Activated CD8-positive, alpha-beta T cell treated with anti-CD3 and anti-CD28 coated beads, Interleukin-2, amount 10 ng/mL, durations not matched to agents 7 days and 5 days (primary cell): ENCODE measurements at regions of chr6 and their contacts with region 1.

Region 1: GRCh38 chr6:158660333-158660754 is 10.5 kb downstream of the SYTL3 start:
- DNase-seq: peak; percentile 66
- ATAC-seq: peak; percentile 69
- H3K4me3 Mint-ChIP-seq: no peak overlapping the region
- H3K27ac Mint-ChIP-seq: peak overlapping the region; percentile 60
- H3K4me1 Mint-ChIP-seq: peaks cover 62% of the 10 kb centered on the region
- H3K27me3 Mint-ChIP-seq: no peaks in the 10 kb centered on the region

Region 2: GRCh38 chr6:158644231-158645063 is 15.9 kb before region 1 on chr6 and contains the start of gene DYNLT1:
- CTCF ChIA-PET with region 1: interaction called, 88 read pairs
- POLR2A ChIA-PET with region 1: interaction called, 19 read pairs
- DNase-seq: peak; percentile 91
- ATAC-seq: peak; percentile 74
- H3K4me3 Mint-ChIP-seq: peak within 1 kb of the TSS; percentile 99
- H3K27ac Mint-ChIP-seq: peak within 1 kb of the TSS; percentile 97
- H3K4me1 Mint-ChIP-seq: peaks cover 71% of the 10 kb centered on the region
- H3K27me3 Mint-ChIP-seq: no peaks in the 10 kb centered on the region
- total RNA-seq, gene DYNLT1: 79.0 to 86.4 TPM

Region 3: DNA sequence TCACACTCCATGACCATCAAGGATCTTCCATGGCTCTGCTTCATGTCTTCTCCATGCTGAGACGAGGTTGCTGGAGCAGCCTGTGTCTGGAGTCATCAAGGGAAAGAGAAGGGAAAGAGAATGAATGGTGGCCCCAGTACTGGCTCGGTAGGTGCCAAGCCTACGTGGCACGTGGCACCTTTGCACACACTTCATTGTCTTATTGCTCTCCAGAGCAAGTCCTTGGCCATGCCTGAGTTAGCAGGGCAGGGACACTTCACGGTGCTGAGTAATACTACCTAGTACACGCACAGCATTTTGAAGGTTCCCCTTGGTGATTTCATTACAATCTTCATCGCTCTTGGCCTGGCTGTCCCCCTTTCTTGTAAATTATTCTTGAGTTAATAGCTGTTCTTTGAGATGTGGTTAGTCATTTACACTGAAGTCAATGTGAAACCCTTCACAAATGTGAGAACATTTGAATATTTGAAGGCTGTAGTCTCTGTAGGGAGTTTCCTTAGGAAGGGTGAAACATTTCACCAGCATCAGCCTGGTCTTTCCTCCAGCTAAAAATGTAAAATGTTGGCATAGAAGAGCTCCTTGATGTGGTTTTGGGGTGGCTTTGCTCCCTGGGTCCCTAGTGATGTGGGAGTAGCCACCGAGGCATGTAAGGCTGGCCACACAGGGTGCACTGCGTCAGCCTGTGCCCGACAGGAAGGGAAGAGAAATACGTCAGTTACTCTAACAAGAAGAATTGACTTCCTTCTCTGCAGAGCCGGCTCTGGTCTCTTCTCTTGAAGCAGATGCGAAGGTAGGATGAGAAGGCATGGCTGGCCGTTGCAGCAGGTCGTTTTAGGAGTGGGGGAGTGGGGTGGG is 10.8 kb before region 1 on chr6 and contains the start of gene SYTL3:
- CTCF ChIA-PET with region 1: interaction called, 88 read pairs
- POLR2A ChIA-PET with region 1: interaction called, 19 read pairs
- DNase-seq: peak; percentile 88
- ATAC-seq: peak; percentile 61
- H3K4me3 Mint-ChIP-seq: peak within 1 kb of the TSS; percentile 75
- H3K27ac Mint-ChIP-seq: peak within 1 kb of the TSS; percentile 95
- H3K4me1 Mint-ChIP-seq: peaks cover 75% of the 10 kb centered on the region
- H3K27me3 Mint-ChIP-seq: no peaks in the 10 kb centered on the region
- total RNA-seq, gene SYTL3: 43.5 to 48.3 TPM

Region 4: GRCh38 chr6:158674342-158675131 is 14.2 kb after region 1 on chr6:
- CTCF ChIA-PET with region 1: interaction called, 17 read pairs
- POLR2A ChIA-PET with region 1: no interaction called
- DNase-seq: no peak
- ATAC-seq: no peak
- H3K4me3 Mint-ChIP-seq: no peak overlapping the region
- H3K27ac Mint-ChIP-seq: no peak overlapping the region
- H3K4me1 Mint-ChIP-seq: peaks cover 6% of the 10 kb centered on the region
- H3K27me3 Mint-ChIP-seq: no peaks in the 10 kb centered on the region